ENCODE measurements at regions of chr7 and their contacts with region 1.

Region 1: GRCh38 chr7:75639071-75639885 is 99.5 kb downstream of the HIP1 start:
- DNase-seq: peak; percentile 32
- H3K4me3 Mint-ChIP-seq: peak overlapping the region; percentile 70
- H3K27ac Mint-ChIP-seq: no peak overlapping the region
- H3K4me1 Mint-ChIP-seq: peaks cover 6% of the 10 kb centered on the region
- H3K27me3 Mint-ChIP-seq: no peaks in the 10 kb centered on the region
- CTCF ChIP-seq: no peak

Region 2: GRCh38 chr7:75531359-75531821 is 107.9 kb before region 1 on chr7:
- CTCF ChIA-PET with region 1: interaction called, 3 read pairs
- POLR2A ChIA-PET with region 1: no interaction called
- intact Hi-C with region 1: loop called (anchors 10 kb)
- DNase-seq: peak; percentile 50
- H3K4me3 Mint-ChIP-seq: no peak overlapping the region
- H3K27ac Mint-ChIP-seq: no peak overlapping the region
- H3K4me1 Mint-ChIP-seq: peaks cover 17% of the 10 kb centered on the region
- H3K27me3 Mint-ChIP-seq: no peaks in the 10 kb centered on the region
- CTCF ChIP-seq: no peak